Motor neuron (in vitro differentiated cells): ENCODE measurements at regions of chr1 and their contacts with region 1.

Region 1: DNA sequence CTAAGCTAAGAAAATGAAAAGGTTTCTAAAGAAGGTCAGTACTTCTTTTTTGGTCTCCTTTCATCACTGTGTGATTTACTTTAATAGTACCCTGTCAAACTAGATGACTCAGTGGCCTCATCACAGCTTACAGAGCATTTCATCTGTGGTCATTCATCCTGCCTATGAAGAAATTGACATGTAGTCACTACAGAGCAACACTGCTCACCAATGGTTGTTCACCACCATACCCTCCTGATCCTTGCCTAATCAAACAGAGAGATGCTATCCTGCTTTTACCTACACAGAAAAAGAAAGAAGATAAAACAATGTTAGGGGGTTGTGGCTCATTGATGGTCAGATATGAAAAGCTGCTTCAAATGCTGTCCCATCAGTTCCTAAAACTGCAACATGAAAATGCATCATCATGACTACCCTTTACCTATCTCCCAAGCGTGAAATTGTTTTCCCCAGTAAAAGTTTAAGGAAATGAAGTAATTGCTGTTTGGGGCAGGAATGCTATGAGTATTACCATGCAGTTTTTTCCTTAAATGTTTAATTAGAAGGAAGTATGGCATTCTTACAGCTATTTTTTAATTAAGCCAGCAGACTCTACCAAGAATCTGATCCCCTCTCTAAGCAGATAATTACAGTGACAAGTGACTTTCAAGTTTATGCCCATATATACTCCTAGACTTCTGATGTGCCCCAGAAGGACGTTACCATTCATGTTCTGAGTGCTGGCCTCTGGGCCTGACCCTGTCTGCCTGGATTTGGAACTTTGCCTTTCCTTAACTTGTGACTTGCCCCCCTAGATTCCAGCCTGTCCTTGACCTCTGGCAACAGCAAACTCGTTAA is 46.1 kb upstream of the FBXO28 start:
- ATAC-seq: peak in 6 of 8 experiments; percentile 63 to 85 (median 73)
- H3K4me3 ChIP-seq: no peak overlapping the region
- H3K27ac ChIP-seq: no peak overlapping the region
- H3K4me1 ChIP-seq: peaks cover 0 to 4% of the 10 kb centered on the region in 2 donors

Region 2: GRCh38 chr1:223776075-223776814 is 291.6 kb before region 1 on chr1:
- in situ Hi-C with region 1: loop called in 1 of 9 experiments (anchors 25 kb)
- ATAC-seq: peak in 2 of 8 experiments; percentile 33 to 36
- H3K4me3 ChIP-seq: no peak overlapping the region
- H3K27ac ChIP-seq: no peak overlapping the region
- H3K4me1 ChIP-seq: peaks cover 14 to 21% of the 10 kb centered on the region in 2 donors